A673 (cell line): ENCODE measurements at regions of chr12 and their contacts with region 1.

Region 1: DNA sequence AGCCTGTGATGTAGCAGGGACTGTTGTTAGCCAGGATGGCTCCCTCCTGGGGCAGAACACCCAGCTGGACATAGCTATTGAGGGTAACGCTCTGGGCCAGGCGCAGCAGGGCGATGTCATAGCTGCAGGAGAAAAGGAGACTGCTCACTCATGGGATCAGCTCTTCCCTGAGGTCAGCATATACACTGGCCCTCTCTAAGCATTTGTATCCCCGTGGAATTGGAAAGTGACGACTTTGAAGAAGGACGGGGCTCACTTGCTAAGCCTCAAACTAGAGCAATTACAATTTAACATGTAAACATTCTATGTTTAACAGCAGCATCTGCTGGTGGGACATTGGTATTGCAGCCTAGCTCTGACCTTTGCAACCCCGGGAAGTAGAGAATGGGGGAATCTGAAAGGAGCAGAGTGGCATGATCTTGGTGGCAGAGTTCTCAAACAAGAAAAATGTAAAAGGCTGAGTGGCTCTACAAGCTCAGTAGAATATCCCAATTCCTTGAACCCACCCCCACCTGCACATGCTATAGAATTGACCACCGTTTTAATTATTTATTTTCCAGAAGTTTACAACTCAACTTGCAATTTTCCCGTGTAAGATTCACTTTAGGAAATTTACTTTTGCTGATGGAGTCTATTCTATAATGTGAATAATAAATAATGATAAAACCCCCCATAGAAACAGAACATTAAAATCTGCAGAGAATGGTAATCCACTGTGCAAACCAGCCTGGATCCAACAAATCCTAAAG is 5.0 kb downstream of the CELA1 start:
- DNase-seq: peak; percentile 78
- H3K4me3 ChIP-seq: peak overlapping the region; percentile 22
- H3K27ac ChIP-seq: no peak overlapping the region
- H3K4me1 ChIP-seq: peaks cover 5% of the 10 kb centered on the region
- H3K27me3 ChIP-seq: no peaks in the 10 kb centered on the region
- CTCF ChIP-seq: peak; percentile 97

Region 2: DNA sequence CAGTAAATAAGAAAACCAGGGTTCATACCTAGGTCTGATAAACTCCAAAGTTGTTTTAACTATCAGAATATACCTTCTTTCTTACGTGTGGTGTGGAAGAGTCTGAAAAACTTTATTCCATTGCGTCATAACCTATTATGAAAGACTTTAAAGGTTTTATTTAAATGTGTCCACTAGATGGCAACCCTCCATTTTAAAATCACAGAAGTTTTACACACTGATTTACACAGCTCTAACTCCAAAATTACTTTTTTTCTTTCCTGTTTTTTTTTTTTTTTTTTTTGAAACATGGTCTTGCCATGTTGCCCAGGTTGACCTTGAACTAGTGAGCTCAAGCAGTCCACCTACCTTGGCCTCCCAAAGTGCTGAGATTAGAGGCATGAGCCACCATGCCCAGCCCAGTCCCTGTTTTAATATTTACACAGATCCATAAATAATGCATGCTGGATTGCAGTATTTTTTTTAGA is 516.0 kb before region 1 on chr12:
- CTCF ChIA-PET with region 1: interaction called, 35 read pairs
- POLR2A ChIA-PET with region 1: no interaction called
- intact Hi-C with region 1: loop called (anchors 5 kb)
- DNase-seq: peak; percentile 77
- H3K4me3 ChIP-seq: no peak overlapping the region
- H3K27ac ChIP-seq: peak overlapping the region; percentile 54
- H3K4me1 ChIP-seq: no peaks in the 10 kb centered on the region
- H3K27me3 ChIP-seq: no peaks in the 10 kb centered on the region
- CTCF ChIP-seq: peak; percentile 63

Region 3: DNA sequence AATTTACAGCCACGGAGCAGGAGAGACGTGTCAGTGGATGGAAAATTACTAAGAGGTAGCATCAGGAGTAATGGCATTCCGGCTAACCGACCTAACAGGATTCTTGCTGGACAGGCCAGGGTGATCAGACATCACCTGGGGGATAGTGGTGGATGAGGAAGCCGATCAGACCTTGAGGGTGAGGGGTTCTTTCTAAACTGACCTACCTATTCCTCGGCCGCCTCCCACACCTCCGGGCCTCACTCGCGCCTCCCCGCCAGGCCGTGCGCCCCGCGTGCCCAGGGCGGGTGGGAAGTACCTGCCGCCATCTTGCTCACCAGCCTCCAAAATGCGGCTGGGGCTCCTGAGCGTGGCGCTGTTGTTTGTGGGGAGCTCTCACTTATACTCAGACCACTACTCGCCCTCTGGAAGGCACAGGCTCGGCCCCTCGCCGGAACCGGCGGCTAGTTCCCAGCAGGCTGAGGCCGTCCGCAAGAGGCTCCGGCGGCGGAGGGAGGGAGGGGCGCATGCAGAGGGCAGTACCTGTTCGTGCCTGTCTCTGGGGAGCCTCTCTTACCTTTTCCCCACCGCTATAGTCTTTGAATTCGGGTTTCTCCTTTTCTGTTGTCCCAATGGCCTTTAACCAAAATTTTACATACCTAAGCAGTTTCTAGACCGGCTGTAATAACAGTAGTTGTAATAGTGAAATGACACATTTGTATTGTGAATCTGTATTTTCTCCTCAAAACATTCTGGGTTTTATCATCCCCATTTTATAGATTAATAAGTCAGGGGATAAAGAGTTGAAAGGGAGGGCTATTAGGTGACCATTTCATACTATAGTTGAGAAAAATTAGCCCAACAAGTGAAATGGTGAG is 498.6 kb before region 1 on chr12 and contains the start of gene TMPRSS12:
- CTCF ChIA-PET with region 1: interaction called, 11 read pairs
- POLR2A ChIA-PET with region 1: no interaction called
- intact Hi-C with region 1: no loop called
- DNase-seq: no peak
- H3K4me3 ChIP-seq: no peak within 1 kb of the TSS
- H3K27ac ChIP-seq: no peak within 1 kb of the TSS
- H3K4me1 ChIP-seq: no peaks in the 10 kb centered on the region
- H3K27me3 ChIP-seq: no peaks in the 10 kb centered on the region
- CTCF ChIP-seq: no peak
- total RNA-seq, gene TMPRSS12: not detected in 2 replicates

Region 4: GRCh38 chr12:51047655-51048540 is 293.5 kb before region 1 on chr12 and contains the start of gene LETMD1:
- CTCF ChIA-PET with region 1: no interaction called
- POLR2A ChIA-PET with region 1: no interaction called
- intact Hi-C with region 1: loop called (anchors 10 kb)
- DNase-seq: peak; percentile 99
- H3K4me3 ChIP-seq: peak within 1 kb of the TSS; percentile 71
- H3K27ac ChIP-seq: peak within 1 kb of the TSS; percentile 82
- H3K4me1 ChIP-seq: peaks cover 9% of the 10 kb centered on the region
- H3K27me3 ChIP-seq: no peaks in the 10 kb centered on the region
- CTCF ChIP-seq: peak; percentile 97
- total RNA-seq, gene LETMD1: 60.3 and 63.7 TPM in 2 replicates

Region 5: DNA sequence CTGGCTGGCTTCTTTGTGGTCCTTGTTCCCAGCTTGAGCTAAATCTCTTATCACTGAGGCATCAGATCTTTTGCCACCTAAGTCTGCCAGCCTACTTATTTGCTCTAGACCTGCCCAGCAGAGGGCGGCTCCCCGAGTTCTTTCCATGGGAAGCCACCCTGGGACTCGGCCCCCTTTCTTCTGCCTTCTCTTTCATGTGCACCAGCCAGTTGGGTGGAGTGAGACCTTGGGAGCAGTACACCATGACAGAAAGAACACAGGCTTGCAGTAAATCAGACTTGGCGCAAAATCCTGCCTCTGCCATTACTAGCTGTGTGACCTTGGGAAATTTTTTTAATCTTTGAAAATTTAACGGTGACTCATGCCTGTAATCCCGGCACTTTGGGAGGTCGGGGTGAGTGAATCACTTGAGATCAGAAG is 78.7 kb before region 1 on chr12:
- CTCF ChIA-PET with region 1: interaction called, 5 read pairs
- POLR2A ChIA-PET with region 1: no interaction called
- intact Hi-C with region 1: loop called (anchors 1 kb)
- DNase-seq: peak; percentile 81
- H3K4me3 ChIP-seq: no peak overlapping the region
- H3K27ac ChIP-seq: peak overlapping the region; percentile 30
- H3K4me1 ChIP-seq: peaks cover 13% of the 10 kb centered on the region
- H3K27me3 ChIP-seq: no peaks in the 10 kb centered on the region
- CTCF ChIP-seq: peak; percentile 69